GM12878 (cell line): ENCODE measurements at regions of chr7 and their contacts with region 1.

Region 1: GRCh38 chr7:17408245-17408903 is 109.9 kb downstream of the AHR start:
- DNase-seq: no peak
- ATAC-seq: no peak
- H3K4me3 ChIP-seq: no peak overlapping the region
- H3K27ac ChIP-seq: no peak overlapping the region
- H3K4me1 ChIP-seq: peaks cover 3% of the 10 kb centered on the region; the same call in 1 of the 2 replicates
- H3K27me3 ChIP-seq: no peaks in the 10 kb centered on the region
- CTCF ChIP-seq: no peak
- EP300 ChIP-seq: no peak
- POLR2A ChIP-seq: no peak
- RAD21 ChIP-seq: no peak

Region 2: DNA sequence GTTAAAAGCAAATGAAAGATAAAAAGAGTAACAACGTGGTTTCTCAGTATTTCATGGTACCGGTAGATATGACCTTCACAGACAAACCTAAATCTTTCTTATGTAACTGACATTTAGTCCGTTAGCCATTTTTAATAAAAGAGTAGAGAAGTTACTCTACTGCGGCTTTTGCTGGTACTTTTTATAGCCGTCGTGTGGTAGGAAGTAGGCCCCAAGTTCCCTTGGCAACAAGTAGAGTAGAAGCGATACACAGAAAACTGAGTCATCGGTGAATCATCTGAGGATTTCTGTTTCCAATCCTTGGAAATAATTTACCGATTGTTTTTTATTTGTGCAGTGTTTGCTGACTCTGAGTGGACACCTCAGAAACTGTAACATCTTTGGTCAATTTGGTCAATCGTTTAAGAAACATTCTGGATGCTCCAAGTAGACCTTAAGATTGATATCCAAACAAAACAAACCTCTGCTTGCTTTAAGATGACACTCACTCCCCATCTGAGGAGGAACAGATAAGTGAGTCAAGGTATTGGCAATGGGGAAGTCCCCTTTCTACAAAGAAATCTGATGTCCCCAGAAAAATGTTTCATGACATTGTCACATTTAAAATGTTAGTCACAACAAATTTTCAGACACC is 173.9 kb before region 1 on chr7:
- CTCF ChIA-PET with region 1: no interaction called
- POLR2A ChIA-PET with region 1: no interaction called
- RAD21 ChIA-PET with region 1: no interaction called
- SMC1A ChIA-PET with region 1: interaction called, 3 read pairs
- in situ Hi-C with region 1: no loop called
- intact Hi-C with region 1: loop called (anchors 10 kb)
- DNase-seq: peak; percentile 74
- ATAC-seq: peak; percentile 96
- H3K4me3 ChIP-seq: peak overlapping the region; percentile 46; the same call in 1 of the 2 replicates
- H3K27ac ChIP-seq: peak overlapping the region; percentile 96
- H3K4me1 ChIP-seq: peaks cover 12% of the 10 kb centered on the region
- H3K27me3 ChIP-seq: no peaks in the 10 kb centered on the region
- CTCF ChIP-seq: peak in 1 of 3 experiments; percentile 28; a peak in 1 of 6 replicates
- EP300 ChIP-seq: peak; percentile 95 to 99
- POLR2A ChIP-seq: no peak
- RAD21 ChIP-seq: peak; percentile 39; the same call in 1 of the 2 replicates